Sciatic nerve (tissue), 2 donors: ENCODE measurements at regions of chr12 and their contacts with region 1.

Region 1: DNA sequence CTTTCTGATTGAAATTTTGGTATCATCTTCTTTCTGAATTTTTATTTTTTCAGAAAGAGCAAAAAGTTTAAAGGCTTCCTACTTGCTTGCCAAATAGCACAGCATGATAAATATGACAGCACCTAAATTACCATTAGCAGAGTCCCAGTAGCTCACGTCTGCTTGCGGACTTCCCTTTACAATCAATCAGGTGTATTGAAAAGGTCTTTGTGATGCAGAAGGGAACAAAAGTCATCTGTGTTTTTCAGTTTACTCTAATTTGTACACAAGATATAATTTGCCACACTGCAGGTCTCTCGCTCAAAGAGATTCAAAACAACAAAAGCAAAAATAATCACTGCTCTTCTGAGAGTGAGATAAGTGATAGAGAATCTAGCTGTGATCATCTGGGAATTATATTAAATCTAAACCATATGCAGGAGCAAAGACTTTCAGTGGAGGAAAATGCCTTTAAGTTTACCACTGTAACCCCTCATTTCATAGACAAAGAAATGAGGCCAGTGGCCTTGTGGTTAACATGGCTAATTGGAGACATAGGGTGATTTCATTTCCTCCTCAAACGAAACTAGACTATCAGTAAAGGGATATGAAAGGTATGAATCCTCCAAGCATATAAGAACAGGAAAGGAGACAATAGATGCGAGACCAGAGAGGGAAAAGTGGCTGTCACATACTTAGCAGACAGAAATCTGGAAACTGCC is 240.8 kb upstream of the TMPO start:
- DNase-seq: no peak
- ATAC-seq: no peak

Region 2: DNA sequence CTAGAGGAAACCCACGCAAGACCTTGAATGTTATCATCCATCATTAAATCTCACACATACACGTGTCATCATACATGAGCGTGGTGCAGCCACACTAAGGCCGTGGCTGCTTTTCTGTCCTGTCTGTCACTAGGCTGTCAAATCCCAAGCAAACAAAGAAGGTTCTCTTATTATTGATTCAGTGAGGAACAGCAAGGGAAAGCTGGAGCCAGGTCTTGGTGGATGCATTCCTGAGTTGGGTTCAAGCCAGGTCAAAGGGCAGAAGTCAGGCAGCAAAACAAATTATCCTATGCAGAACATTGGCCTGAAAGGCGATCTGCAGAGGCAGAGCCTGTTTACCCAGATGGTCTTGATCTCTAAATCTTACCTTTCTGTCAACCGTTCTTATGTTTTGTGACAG is 1115.2 kb before region 1 on chr12:
- intact Hi-C with region 1: no loop called
- DNase-seq: no peak
- ATAC-seq: no peak

Region 3: GRCh38 chr12:99833397-99833796 is 1558.8 kb after region 1 on chr12:
- intact Hi-C with region 1: no loop called
- DNase-seq: no peak
- ATAC-seq: no peak

Region 4: GRCh38 chr12:99861731-99862130 is 1587.2 kb after region 1 on chr12:
- intact Hi-C with region 1: loop called (anchors 5 kb)
- DNase-seq: no peak
- ATAC-seq: no peak